ENCODE measurements at regions of chr18 and their contacts with region 1.

Region 1: GRCh38 chr18:48330403-48331022 is 78.7 kb downstream of the ZBTB7C start:
- DNase-seq: no peak
- ATAC-seq: peak in 2 of 4 donors; percentile 45 to 47
- H3K4me3 ChIP-seq: no peak overlapping the region
- H3K27ac ChIP-seq: no peak overlapping the region
- H3K4me1 ChIP-seq: peaks cover 0 to 4% (median 0%) of the 10 kb centered on the region in 12 donors
- H3K27me3 ChIP-seq: no peaks in the 10 kb centered on the region
- CTCF ChIP-seq: no peak
- POLR2A ChIP-seq: no peak

Region 2: GRCh38 chr18:48238206-48238605 is 92.3 kb before region 1 on chr18:
- intact Hi-C with region 1: loop called in 1 of 10 experiments (anchors 5 kb)
- DNase-seq: no peak
- ATAC-seq: no peak
- H3K4me3 ChIP-seq: no peak overlapping the region
- H3K27ac ChIP-seq: no peak overlapping the region
- H3K4me1 ChIP-seq: no peaks in the 10 kb centered on the region
- H3K27me3 ChIP-seq: no peaks in the 10 kb centered on the region
- CTCF ChIP-seq: no peak
- POLR2A ChIP-seq: no peak

Region 3: DNA sequence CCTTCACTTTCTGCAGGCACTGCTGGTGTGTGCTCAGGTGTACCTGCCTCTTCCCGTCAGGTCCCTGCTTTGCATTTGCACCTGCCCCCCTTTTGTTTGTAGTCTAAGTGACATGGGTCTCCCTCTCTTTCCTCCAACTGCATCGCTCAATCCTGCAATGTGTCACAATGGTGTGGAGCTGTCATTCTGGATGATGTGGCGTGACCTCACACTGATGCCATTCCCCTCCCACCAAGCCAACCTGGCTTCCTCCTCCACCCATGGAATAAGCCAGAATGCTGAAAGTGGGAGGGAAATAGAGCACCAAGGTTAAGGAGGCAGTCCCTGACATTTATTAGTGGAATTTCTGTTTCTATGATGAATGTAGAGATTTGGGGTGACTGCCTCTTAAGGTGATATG is 78.0 kb before region 1 on chr18:
- intact Hi-C with region 1: no loop called
- DNase-seq: no peak
- ATAC-seq: no peak
- H3K4me3 ChIP-seq: no peak overlapping the region
- H3K27ac ChIP-seq: no peak overlapping the region
- H3K4me1 ChIP-seq: no peaks in the 10 kb centered on the region
- H3K27me3 ChIP-seq: no peaks in the 10 kb centered on the region
- CTCF ChIP-seq: no peak
- POLR2A ChIP-seq: no peak

Region 4: DNA sequence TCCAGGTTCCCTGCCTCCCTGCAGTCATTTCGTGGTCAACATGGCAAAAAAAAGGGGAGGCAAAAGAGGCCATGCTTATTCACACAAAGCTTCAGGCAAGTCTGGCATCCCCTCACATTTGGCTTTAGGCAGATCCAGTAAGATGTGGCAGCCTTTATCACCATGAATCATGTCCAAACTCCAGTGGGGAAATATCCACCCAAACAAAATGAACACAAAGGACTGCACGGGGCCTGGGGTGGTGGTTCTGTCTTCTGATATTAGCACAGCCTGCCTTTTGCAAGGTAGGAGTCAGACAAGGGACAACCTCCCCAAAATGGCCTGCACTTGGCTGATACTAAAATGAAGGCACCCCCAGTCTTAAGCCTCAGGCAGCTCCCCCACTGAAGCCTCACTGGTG is 51.2 kb before region 1 on chr18:
- intact Hi-C with region 1: no loop called
- DNase-seq: no peak
- ATAC-seq: no peak
- H3K4me3 ChIP-seq: no peak overlapping the region
- H3K27ac ChIP-seq: no peak overlapping the region
- H3K4me1 ChIP-seq: no peaks in the 10 kb centered on the region
- H3K27me3 ChIP-seq: no peaks in the 10 kb centered on the region
- CTCF ChIP-seq: no peak
- POLR2A ChIP-seq: no peak

Region 5: GRCh38 chr18:48374423-48375149 is 44.1 kb after region 1 on chr18:
- intact Hi-C with region 1: loop called in 1 of 10 experiments (anchors 5 kb)
- DNase-seq: peak in 1 of 5 donors; percentile 8
- ATAC-seq: peak in 2 of 4 donors; percentile 18 to 59
- H3K4me3 ChIP-seq: peak overlapping the region in 1 of 12 donors; percentile 20
- H3K27ac ChIP-seq: peak overlapping the region in 1 of 12 donors; percentile 26
- H3K4me1 ChIP-seq: peaks cover 0 to 18% (median 3%) of the 10 kb centered on the region in 12 donors
- H3K27me3 ChIP-seq: no peaks in the 10 kb centered on the region
- CTCF ChIP-seq: no peak
- POLR2A ChIP-seq: no peak